ENCODE measurements at regions of chr11 and their contacts with region 1.

Region 1: GRCh38 chr11:62591448-62592145 is at the start of gene TUT1:
- DNase-seq: peak; percentile 97
- H3K4me3 Mint-ChIP-seq: peak within 1 kb of the TSS; percentile 94
- H3K27ac Mint-ChIP-seq: peak within 1 kb of the TSS; percentile 93
- H3K4me1 Mint-ChIP-seq: peaks cover 28% of the 10 kb centered on the region
- H3K27me3 Mint-ChIP-seq: no peaks in the 10 kb centered on the region
- total RNA-seq, gene TUT1: 29.9 and 41.7 TPM in 2 replicates

Region 2: DNA sequence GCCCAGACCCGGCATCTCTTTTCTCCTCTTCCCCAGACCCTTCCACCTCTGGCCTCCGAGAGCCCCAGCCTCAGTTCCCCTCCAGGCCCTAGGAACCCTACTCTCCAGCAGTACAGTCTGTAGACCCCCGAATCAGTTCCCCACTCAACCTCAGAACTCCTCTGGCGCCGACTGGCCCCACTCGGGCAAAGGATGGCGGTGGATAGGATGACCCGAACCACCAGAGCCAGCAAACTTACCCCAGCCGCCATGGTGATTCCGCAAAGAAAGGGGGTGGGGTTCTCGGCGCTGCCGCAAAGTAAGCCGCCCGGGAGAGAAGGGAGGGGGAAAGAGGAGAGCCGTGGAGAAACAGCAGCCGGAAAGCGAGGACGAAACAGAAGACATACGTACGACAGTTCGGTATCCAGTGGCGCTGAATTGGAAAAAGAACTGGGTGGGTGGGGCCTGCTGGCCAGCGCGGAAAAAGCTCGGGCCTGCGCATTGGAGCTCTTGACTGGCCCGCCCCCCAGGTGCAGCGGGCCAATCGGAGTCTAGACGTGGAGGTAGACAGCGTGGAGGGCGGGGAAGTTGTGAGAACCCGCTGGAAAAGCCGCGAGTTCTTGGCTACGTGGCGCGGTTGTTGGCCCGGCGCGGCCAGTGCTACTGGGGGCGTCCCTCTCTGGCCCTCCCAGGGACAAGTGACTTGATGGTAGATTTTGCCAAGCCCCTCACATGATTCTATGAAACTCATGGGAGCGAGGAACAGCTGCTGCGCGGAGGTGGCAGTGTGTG is 17.8 kb before region 1 on chr11 and contains the start of gene EEF1G:
- intact Hi-C with region 1: loop called (anchors 1 kb)
- DNase-seq: peak; percentile 99
- H3K4me3 Mint-ChIP-seq: peak within 1 kb of the TSS; percentile 92
- H3K27ac Mint-ChIP-seq: peak within 1 kb of the TSS; percentile 95
- H3K4me1 Mint-ChIP-seq: peaks cover 35% of the 10 kb centered on the region
- H3K27me3 Mint-ChIP-seq: no peaks in the 10 kb centered on the region
- total RNA-seq, gene EEF1G: 1,369 and 1,395 TPM in 2 replicates

Region 3: GRCh38 chr11:62645956-62646824 is 54.6 kb after region 1 on chr11 and contains the start of gene GANAB:
- intact Hi-C with region 1: loop called (anchors 2 kb)
- DNase-seq: peak; percentile 98
- H3K4me3 Mint-ChIP-seq: peak within 1 kb of the TSS; percentile 98
- H3K27ac Mint-ChIP-seq: peak within 1 kb of the TSS; percentile 97
- H3K4me1 Mint-ChIP-seq: peaks cover 21% of the 10 kb centered on the region
- H3K27me3 Mint-ChIP-seq: no peaks in the 10 kb centered on the region
- total RNA-seq, gene GANAB: 274 and 279 TPM in 2 replicates

Region 4: DNA sequence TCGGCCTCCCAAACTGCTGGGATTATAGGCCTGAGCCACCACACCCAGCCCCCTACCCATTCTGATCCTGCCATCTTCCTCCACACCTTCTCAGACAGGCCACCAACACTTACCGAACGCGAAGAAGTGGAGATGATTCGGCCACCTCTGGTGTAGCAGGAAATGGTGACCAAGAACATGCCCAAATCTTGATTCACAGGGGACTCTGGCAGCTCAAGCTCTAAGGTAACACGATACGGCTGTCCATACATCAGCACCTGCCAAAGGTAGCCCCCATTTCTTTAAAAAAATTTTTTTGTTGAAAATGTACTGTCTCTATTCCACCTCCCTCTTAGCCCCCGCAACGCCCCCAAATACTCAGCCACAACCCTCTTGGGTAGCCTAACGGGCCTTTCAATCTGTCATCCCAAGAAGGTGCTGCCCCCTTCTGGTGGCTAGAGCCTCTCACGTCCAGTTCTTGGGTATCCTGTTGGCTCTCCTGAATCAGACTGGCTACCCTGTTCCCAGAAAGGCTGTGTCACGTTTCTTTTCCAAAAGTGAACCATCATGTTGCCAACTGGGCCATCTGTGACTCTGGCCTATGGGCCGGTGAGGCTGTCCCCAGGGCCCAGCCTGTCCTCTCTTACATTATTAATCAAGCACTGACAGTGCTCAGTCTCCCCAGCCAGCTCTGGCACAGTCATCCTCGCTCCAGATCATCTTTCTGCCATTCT is 103.0 kb after region 1 on chr11:
- intact Hi-C with region 1: loop called (anchors 1 kb)
- DNase-seq: peak; percentile 64
- H3K4me3 Mint-ChIP-seq: no peak overlapping the region
- H3K27ac Mint-ChIP-seq: peak overlapping the region; percentile 60
- H3K4me1 Mint-ChIP-seq: peaks cover 8% of the 10 kb centered on the region
- H3K27me3 Mint-ChIP-seq: no peaks in the 10 kb centered on the region

Region 5: GRCh38 chr11:62771144-62772021 is 179.8 kb after region 1 on chr11 and contains the start of gene TAF6L:
- intact Hi-C with region 1: loop called (anchors 5 kb)
- DNase-seq: peak; percentile 92
- H3K4me3 Mint-ChIP-seq: peak within 1 kb of the TSS; percentile 88
- H3K27ac Mint-ChIP-seq: peak within 1 kb of the TSS; percentile 92
- H3K4me1 Mint-ChIP-seq: peaks cover 13% of the 10 kb centered on the region
- H3K27me3 Mint-ChIP-seq: no peaks in the 10 kb centered on the region
- total RNA-seq, gene TAF6L: 17.6 and 21.0 TPM in 2 replicates